ENCODE measurements at regions of chr1 and their contacts with region 1.

Region 1: DNA sequence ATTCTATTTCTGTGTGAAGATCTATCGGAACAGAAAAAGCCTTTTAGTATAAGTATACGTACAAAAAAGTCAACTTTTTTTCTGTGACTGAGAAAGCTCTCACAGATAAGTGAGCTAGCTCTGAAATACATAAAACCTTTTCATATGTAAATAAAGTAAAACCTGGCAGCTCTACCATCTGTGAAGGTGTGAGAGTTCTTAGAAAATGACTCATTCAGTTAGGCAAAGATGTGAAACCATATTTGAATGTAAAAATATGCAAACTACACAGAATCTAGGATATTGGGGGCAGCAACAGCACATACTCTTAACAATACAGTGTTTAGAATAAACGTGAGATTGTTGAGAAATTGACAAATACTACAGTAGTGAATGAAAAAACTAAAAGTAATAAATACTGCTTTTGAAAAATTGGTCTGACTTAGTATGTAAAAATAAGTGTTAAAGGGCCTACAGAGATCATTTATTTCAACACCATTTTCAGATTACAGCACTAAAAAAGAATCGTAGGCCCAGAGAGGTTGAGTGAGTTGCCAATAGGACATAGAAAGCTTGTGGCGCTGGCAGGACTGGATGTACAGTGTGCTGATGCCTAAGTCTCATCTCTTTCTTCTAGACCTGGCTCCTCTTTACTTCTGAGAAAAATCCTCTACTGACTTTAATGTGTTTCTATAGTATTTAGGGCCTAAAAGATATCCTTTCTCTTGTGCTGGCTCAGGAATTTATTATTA is 19.8 kb downstream of the ATP6V1G3 start:
- DNase-seq: no peak
- H3K4me3 Mint-ChIP-seq: peak overlapping the region; percentile 73
- H3K27ac Mint-ChIP-seq: peak overlapping the region; percentile 85
- H3K4me1 Mint-ChIP-seq: peaks cover 60% of the 10 kb centered on the region
- H3K27me3 Mint-ChIP-seq: no peaks in the 10 kb centered on the region

Region 2: GRCh38 chr1:197775282-197776262 is 745.1 kb before region 1 on chr1 and contains the start of gene DENND1B:
- intact Hi-C with region 1: loop called (anchors 5 kb)
- DNase-seq: peak; percentile 83
- H3K4me3 Mint-ChIP-seq: peak within 1 kb of the TSS; percentile 89
- H3K27ac Mint-ChIP-seq: peak within 1 kb of the TSS; percentile 99
- H3K4me1 Mint-ChIP-seq: peaks cover 62% of the 10 kb centered on the region
- H3K27me3 Mint-ChIP-seq: no peaks in the 10 kb centered on the region
- total RNA-seq, gene DENND1B: 18.2 and 19.0 TPM in 2 replicates

Region 3: DNA sequence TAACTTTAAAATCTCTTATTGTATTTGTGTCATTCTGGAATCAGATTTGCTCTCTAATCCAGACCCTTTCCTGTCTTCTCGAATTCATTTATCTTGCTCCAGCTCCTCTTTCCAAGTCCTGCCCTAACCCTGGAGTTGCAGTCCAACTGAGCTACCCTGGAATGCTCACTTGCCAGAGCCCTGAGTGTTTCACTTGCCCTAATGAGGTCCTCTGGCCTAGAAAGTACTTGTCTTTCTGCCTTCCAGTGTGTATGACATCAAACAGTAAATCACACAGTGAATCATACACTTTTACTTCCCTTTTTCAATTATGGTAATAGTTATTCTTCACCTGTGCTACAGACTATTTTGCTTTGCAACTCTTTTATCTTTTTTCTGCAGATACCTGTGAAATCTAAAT is 267.0 kb before region 1 on chr1:
- intact Hi-C with region 1: loop called (anchors 2 kb)
- DNase-seq: no peak
- H3K4me3 Mint-ChIP-seq: peak overlapping the region; percentile 55
- H3K27ac Mint-ChIP-seq: peak overlapping the region; percentile 90
- H3K4me1 Mint-ChIP-seq: peaks cover 41% of the 10 kb centered on the region
- H3K27me3 Mint-ChIP-seq: no peaks in the 10 kb centered on the region

Region 4: GRCh38 chr1:198556971-198557370 is 36.3 kb after region 1 on chr1:
- intact Hi-C with region 1: loop called (anchors 2 kb)
- DNase-seq: peak; percentile 54
- H3K4me3 Mint-ChIP-seq: peak overlapping the region; percentile 63
- H3K27ac Mint-ChIP-seq: peak overlapping the region; percentile 60
- H3K4me1 Mint-ChIP-seq: peaks cover 41% of the 10 kb centered on the region
- H3K27me3 Mint-ChIP-seq: no peaks in the 10 kb centered on the region

Region 5: GRCh38 chr1:198641501-198641900 is 120.8 kb after region 1 on chr1:
- intact Hi-C with region 1: loop called (anchors 1 kb)
- DNase-seq: no peak
- H3K4me3 Mint-ChIP-seq: peak overlapping the region; percentile 87
- H3K27ac Mint-ChIP-seq: peak overlapping the region; percentile 91
- H3K4me1 Mint-ChIP-seq: peaks cover 50% of the 10 kb centered on the region
- H3K27me3 Mint-ChIP-seq: no peaks in the 10 kb centered on the region

Region 6: DNA sequence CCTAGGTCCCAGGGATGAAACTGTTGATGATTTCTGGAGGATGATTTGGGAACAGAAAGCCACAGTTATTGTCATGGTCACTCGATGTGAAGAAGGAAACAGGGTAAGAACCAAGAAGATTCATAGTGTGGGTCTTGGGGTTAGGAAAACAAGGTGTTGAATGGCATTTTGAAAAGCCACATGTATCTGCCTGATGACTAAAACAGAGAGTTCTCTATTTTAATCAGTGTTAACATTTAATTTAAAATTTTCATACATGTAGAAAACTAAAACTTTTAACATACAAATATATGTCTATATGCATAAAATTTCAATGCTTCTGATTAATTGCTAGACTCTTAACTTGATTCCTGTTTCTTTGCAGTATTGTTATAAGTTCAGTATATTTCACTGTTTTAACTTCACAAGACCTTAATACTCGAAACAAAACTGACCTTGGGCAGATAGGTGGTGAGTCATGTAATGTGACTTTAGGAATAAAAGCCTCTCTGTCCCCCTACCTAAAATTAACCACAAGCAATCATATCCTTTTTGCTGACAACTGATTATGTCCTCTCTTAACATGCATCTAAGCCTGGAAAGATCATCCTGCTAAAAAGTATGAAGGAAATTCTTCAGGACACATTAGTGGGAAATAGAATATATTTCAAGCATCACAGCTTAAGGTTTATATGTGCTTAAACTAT is 213.8 kb after region 1 on chr1:
- intact Hi-C with region 1: loop called (anchors 5 kb)
- DNase-seq: no peak
- H3K4me3 Mint-ChIP-seq: no peak overlapping the region
- H3K27ac Mint-ChIP-seq: peak overlapping the region; percentile 73
- H3K4me1 Mint-ChIP-seq: peaks cover 62% of the 10 kb centered on the region
- H3K27me3 Mint-ChIP-seq: no peaks in the 10 kb centered on the region

Measured in activated T-helper 2 cell treated with anti-CD3 and anti-CD28 coated beads, Interferon-gamma antibody, Interleukin-2, Interleukin-4, amounts not matched to agents 10 μg/mL and 5 μg/mL and 100 μg/mL, durations not matched to agents 14 hours and 24 hours and 36 hours (primary cell).